ENCODE measurements at regions of chr9 and their contacts with region 1.

Region 1: DNA sequence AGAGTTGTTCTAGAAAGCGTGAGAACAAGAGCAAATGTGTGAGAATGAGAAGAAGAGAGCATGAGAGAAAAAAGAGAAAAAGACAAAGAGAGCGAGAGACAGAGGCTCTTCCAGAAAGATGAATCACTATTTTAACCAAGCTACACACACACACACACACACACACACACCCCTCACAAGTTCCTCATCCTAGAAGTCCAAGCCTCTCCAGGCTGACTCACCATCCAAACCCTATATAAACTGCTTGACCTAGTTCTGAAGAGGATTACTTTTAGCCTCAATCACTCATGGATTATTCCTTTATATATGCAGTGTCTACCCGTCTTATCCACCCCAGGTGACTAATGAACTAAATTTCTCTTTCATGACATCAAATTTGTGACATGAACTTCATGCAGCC is 37.6 kb downstream of the C9orf57 start:
- DNase-seq: peak; percentile 47
- H3K4me3 ChIP-seq: no peak overlapping the region
- H3K27ac ChIP-seq: no peak overlapping the region
- H3K27me3 ChIP-seq: no peaks in the 10 kb centered on the region
- CTCF ChIP-seq: no peak

Region 2: DNA sequence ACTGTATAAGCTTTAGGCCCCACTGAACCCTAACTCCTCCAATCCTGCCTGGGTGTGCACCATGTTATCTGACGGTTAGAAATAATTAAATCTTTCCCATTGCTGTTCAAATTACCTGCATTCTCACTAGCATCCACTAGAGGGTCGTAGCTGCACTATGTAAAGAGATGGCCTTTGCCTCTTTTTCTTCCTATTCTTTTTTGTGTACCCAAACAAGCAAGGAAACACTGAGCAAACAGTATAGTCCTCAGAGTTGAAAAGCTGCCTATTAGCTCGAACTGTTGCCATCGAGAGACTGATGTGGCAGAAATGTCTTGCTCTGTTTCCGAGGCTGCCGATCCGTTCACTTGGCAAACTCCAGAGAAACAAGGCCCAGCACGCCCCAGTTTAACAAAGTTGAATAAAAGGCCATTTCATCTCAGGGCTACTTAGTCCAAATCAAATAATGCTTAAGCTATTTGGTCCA is 737.6 kb before region 1 on chr9:
- CTCF ChIA-PET with region 1: interaction called, 29 read pairs
- POLR2A ChIA-PET with region 1: no interaction called
- DNase-seq: peak; percentile 33
- H3K4me3 ChIP-seq: no peak overlapping the region
- H3K27ac ChIP-seq: no peak overlapping the region
- H3K27me3 ChIP-seq: no peaks in the 10 kb centered on the region
- CTCF ChIP-seq: peak; percentile 92

Region 3: GRCh38 chr9:71801826-71802225 is 221.0 kb before region 1 on chr9:
- CTCF ChIA-PET with region 1: interaction called, 193 read pairs
- POLR2A ChIA-PET with region 1: no interaction called
- DNase-seq: no peak
- H3K4me3 ChIP-seq: no peak overlapping the region
- H3K27ac ChIP-seq: no peak overlapping the region
- H3K27me3 ChIP-seq: peaks cover 2% of the 10 kb centered on the region
- CTCF ChIP-seq: no peak

Region 4: DNA sequence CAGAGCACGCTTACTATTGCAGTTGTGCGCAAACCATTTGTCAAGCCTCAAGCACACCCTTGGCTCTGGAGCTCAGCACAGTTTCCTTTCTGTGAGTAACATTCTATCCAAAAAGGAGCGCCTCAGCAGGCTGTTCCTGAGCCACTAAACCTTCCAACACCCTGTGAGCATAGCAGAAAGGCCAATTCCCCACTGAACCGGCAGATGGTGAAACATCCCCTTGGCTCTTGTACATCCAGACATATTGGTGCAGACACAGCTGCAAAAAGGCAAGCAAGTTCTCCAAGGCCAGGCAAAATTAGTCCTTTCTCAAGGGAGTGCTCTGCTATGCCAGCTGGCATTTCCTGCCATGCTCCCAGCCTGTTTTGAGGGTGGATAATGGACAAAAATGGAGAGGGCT is 210.5 kb before region 1 on chr9:
- CTCF ChIA-PET with region 1: interaction called, 193 read pairs
- POLR2A ChIA-PET with region 1: no interaction called
- DNase-seq: no peak
- H3K4me3 ChIP-seq: no peak overlapping the region
- H3K27ac ChIP-seq: no peak overlapping the region
- H3K27me3 ChIP-seq: peaks cover 2% of the 10 kb centered on the region
- CTCF ChIP-seq: peak; percentile 31

Region 5: GRCh38 chr9:71911253-71912074 is 111.4 kb before region 1 on chr9 and contains the start of gene C9orf85:
- CTCF ChIA-PET with region 1: interaction called, 11 read pairs
- POLR2A ChIA-PET with region 1: interaction called, 4 read pairs
- DNase-seq: peak; percentile 98
- H3K4me3 ChIP-seq: peak within 1 kb of the TSS; percentile 89
- H3K27ac ChIP-seq: peak within 1 kb of the TSS; percentile 84
- H3K27me3 ChIP-seq: no peaks in the 10 kb centered on the region
- CTCF ChIP-seq: no peak
- polyA plus RNA-seq, gene C9orf85: 15.1 and 19.8 TPM in 2 replicates

Region 6: GRCh38 chr9:72038890-72039410 is 16.1 kb after region 1 on chr9:
- CTCF ChIA-PET with region 1: interaction called, 53 read pairs
- POLR2A ChIA-PET with region 1: interaction called, 4 read pairs
- DNase-seq: peak; percentile 61
- H3K4me3 ChIP-seq: no peak overlapping the region
- H3K27ac ChIP-seq: no peak overlapping the region
- H3K27me3 ChIP-seq: peaks cover 6% of the 10 kb centered on the region
- CTCF ChIP-seq: peak; percentile 96